AG04449 (cell line): ENCODE measurements at regions of chr5 and their contacts with region 1.

Region 1: DNA sequence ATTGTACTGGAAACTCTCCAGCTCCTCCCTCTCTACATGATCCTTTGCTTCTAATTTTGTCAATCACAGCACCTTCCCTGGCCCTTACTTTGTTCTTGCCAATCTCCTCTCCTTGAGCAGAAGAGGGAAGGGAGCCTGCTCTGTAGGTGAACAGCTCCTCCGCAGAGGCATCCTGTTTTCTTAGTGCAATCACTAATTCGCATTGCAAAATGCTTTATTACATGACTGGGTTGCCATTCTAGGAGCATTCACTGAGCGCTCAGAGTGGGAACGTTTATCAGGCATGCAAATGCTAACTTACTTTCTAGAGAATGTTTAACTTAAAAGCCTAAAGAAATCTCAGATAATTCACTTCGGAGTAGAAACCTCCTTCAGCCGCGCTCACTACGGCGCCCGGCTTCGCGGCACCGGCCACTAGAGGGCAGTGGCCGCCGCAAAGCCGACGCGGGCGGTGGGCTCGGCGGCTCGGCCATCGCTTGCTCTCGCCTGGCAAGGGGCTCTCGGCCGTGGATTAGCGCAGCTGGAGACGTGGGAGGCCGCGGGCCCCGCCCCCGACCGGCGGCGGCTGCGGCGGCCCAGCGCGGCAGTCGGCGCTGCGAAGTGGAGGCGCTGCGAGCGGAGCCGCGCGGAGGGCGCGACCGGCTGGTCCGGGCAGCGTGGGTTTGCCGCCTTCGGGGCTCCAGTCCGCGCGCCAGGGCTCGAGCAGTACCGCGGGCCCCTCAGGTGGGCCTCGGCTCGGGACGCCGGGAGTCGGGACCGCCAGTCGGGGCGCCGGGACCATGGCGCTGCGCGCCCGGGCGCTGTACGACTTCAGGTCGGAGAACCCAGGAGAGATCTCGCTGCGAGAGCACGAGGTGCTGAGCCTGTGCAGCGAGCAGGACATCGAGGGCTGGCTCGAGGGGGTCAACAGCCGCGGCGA is at the start of gene SNX18:
- DNase-seq: peak; percentile 56
- H3K4me3 ChIP-seq: peak within 1 kb of the TSS; percentile 62
- CTCF ChIP-seq: peak; percentile 88

Region 2: DNA sequence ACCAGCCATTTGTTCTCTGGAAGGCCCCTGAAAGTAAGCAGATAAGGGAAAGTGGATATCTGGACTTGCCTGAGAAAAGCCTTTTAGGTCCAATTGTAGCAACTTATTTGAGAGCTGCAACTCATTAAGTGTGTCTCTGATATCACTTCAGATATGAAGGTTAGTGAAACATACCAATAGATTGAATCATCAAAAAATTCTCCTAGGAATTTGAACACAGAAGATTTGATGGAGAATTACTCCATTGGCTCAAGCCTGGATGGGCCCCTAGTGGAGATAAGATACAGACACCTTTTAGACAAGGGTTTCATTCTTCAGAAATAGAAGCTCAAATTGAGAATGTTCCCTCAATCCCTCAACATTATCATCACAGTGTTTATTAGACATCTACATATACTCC is 600.3 kb before region 1 on chr5:
- CTCF ChIA-PET with region 1: no interaction called
- POLR2A ChIA-PET with region 1: no interaction called
- DNase-seq: peak; percentile 12
- H3K4me3 ChIP-seq: no peak overlapping the region
- CTCF ChIP-seq: peak; percentile 45

Region 3: DNA sequence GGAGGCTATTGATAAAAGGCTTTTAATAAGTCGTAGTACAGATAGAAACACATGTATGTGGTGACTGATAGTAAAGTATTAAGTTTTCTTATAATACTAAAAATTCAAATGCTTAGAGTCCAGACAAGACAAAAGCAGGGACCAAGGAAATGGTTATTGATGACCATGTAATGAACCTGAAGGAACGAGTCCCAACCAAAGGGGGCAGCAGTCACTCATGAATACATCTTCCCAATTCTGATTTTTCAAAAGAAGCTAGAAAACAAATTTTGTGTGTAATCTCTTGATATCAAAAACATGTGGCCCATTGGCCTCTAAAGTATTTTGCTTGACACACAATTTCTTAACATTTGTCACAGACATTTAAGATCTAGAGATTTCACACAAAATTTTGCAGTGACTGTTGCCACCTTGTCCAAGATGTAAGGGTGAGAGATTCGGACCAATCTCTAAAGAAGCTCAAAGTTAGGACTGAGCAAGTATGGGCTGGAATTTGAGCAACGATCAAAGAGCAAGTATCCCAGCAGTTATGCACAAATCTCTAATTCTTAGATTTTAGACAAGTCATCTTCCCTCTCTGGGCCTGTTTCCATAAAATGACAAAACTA is 273.9 kb before region 1 on chr5:
- CTCF ChIA-PET with region 1: interaction called, 28 read pairs
- POLR2A ChIA-PET with region 1: no interaction called
- DNase-seq: no peak
- H3K4me3 ChIP-seq: no peak overlapping the region
- CTCF ChIP-seq: peak; percentile 53

Region 4: DNA sequence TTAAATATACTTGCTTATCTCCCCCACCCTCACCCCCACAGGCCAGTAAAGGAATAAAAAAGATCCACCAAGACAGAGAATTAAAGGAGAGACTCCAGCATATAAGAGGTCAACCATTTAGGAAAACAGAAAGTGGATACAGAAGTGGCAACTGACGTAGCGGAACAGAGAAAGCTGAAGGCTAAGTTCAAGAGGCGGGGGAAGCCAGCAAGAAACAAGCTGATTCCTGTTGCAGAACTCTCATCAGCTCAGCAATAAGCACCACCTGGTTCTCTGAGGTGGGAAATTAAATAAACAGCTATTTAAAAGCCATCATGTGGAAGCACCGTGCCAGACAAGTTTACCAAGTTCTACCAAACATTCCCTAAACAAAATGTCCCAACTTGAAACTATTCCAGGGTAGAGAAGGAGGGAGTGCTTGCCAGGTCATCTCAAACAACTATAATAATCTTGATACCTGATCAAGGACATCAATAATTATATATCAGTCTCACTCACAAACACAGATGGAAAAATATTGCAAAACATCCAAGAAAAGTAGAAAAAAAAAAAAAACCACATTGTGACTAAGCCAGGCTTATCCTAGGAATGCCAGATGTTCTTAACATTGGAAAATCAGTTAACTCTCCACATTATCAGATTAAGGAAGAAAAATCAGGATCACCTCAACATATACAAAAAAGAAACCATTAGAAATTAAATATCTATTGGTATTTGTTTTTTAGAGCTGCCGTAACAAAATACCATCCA is 199.7 kb before region 1 on chr5:
- CTCF ChIA-PET with region 1: no interaction called
- POLR2A ChIA-PET with region 1: no interaction called
- DNase-seq: no peak
- H3K4me3 ChIP-seq: no peak overlapping the region
- CTCF ChIP-seq: no peak

Region 5: GRCh38 chr5:54743997-54744788 is 226.8 kb after region 1 on chr5:
- CTCF ChIA-PET with region 1: interaction called, 22 read pairs
- POLR2A ChIA-PET with region 1: no interaction called
- DNase-seq: peak; percentile 92
- H3K4me3 ChIP-seq: no peak overlapping the region
- CTCF ChIP-seq: no peak

Region 6: GRCh38 chr5:54844905-54845566 is 327.6 kb after region 1 on chr5:
- CTCF ChIA-PET with region 1: interaction called, 148 read pairs
- POLR2A ChIA-PET with region 1: interaction called, 3 read pairs
- DNase-seq: no peak
- H3K4me3 ChIP-seq: no peak overlapping the region
- CTCF ChIP-seq: no peak

Region 7: DNA sequence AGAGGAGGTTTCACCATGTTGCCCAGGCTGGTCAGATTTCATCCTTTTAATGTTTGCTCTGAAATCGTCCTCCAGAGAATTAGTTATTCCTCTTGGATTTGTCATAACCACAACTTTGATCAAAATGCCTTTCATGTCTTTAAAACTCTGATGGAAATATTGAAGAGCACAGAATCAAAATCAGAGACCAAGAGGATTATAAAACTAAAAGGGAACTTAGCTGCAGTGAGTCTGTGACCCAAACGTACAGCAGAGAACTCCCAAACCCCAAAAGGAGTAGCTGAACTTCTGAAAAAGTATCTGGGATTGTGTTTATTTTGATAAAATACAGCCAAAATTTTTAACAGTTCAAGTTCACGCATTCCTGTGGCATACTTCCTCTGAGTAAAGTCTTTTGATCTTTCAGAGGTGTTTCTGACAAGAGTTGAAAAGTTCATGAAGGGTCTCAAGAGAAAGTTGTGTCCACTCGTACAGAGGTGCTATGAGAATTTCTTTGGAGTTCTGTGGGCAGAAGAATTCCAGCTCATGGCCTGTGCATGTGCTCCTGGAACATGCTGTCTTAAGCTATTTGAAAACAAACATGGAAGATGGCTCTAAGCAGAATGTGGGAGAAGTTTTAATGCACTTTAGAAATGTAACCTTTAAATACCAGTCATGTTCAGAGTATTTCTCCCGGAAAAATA is 343.9 kb after region 1 on chr5:
- CTCF ChIA-PET with region 1: interaction called, 137 read pairs
- POLR2A ChIA-PET with region 1: no interaction called
- DNase-seq: no peak
- H3K4me3 ChIP-seq: no peak overlapping the region
- CTCF ChIP-seq: no peak

Region 8: GRCh38 chr5:54874373-54874921 is 357.0 kb after region 1 on chr5:
- CTCF ChIA-PET with region 1: interaction called, 28 read pairs
- POLR2A ChIA-PET with region 1: no interaction called
- DNase-seq: no peak
- H3K4me3 ChIP-seq: no peak overlapping the region
- CTCF ChIP-seq: no peak

Region 9: GRCh38 chr5:54905943-54906537 is 388.6 kb after region 1 on chr5:
- CTCF ChIA-PET with region 1: interaction called, 12 read pairs
- POLR2A ChIA-PET with region 1: interaction called, 3 read pairs
- DNase-seq: no peak
- H3K4me3 ChIP-seq: no peak overlapping the region
- CTCF ChIP-seq: peak; percentile 54